ENCODE measurements at regions of chr17 and their contacts with region 1.

Region 1: DNA sequence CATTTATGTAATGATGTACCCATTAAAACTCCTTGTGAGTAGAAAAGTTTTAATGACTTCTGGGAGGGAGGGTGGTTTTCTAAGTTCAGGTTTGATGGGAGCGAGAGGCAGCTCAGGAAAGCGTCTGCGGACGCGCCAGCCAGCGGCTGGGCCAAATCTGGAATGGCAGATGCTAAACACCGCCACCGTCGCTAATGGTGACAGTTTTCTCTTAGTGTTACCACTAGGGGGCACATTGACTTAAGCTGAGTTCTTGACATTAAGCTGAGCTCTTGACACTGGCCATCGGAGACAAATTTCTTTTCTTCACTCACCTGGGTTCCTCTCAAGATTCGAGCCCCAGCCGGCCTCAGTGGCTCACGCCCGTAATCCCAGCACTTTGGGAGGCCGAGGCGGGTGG is 6.7 kb downstream of the TRPV1 start:
- DNase-seq: no peak
- CTCF ChIP-seq: peak; percentile 43

Region 2: DNA sequence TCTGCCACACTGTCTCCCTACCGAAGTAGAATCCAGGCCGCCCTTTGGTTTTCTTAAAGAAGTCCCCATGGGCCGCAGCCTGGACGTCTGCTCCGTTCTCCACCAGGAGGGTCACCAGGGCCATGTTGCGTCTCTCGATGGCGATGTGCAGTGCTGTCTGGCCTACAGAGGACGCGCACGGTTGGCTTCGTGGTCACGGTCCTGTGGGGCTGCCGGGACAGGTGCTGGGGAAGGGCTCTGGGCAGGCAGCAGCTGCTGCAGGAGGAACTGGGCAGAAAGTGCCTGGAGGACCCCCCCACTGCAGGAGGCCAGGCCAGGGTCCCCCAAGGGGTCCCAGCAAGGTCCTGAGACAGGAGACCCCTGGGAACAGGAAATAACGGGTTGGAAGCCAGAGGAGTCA is 12.3 kb before region 1 on chr17:
- CTCF ChIA-PET with region 1: interaction called, 37 read pairs
- POLR2A ChIA-PET with region 1: no interaction called
- DNase-seq: no peak
- CTCF ChIP-seq: no peak

Region 3: GRCh38 chr17:3622977-3623594 is 20.6 kb after region 1 on chr17:
- CTCF ChIA-PET with region 1: interaction called, 12 read pairs
- POLR2A ChIA-PET with region 1: no interaction called
- DNase-seq: no peak
- CTCF ChIP-seq: no peak

Region 4: DNA sequence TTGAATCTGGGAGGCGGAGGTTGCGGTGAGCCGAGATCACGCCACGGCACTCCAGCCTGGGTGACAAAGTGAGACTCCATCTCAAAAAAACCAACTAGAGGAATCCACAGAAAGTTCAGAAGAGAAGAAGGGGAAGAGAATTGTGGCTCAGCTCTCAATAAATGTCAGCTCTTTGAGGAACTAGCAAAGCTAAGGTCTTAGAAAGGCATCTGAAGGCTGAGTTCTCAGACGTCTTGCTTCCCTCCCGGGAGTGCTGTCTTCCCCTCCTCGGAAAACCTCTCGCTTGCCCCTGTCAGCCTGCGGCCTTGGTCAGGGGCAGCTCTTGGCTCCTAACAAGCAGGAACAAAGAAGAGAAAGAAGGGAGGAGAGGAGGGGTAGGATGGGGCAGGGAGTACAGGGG is 28.3 kb after region 1 on chr17:
- CTCF ChIA-PET with region 1: interaction called, 12 read pairs
- POLR2A ChIA-PET with region 1: no interaction called
- DNase-seq: no peak
- CTCF ChIP-seq: no peak

Measured in GM10248 (cell line).